ENCODE measurements at regions of chr10 and their contacts with region 1.

Region 1: DNA sequence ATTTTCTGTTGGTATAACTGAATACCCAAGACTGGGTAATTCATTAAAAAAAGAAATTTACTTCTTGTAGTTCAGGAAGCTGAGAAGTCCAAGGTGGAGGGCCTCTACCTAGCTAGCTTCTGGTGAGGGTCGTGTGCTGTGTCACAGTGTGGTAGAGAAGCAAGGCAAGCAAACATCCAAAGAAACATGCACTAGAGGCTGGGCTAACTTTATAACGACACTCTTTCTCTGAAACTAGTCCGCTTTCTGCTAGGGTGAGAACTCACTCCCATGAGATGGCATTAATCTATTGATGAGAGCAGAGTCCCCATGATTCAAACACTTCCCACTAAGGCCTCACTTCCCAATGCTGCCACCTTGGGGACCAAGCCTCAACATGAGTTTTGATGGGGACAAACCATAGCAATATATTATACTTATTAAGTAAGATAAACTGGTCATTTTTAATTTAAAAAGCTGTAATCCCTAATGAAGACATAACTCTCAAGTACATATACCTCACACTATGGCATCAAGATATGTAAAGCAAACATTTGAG is 50.8 kb downstream of the PHYHIPL start:
- DNase-seq: no peak
- ATAC-seq: no peak
- H3K4me3 ChIP-seq: no peak overlapping the region
- H3K27ac ChIP-seq: no peak overlapping the region
- H3K4me1 ChIP-seq: no peaks in the 10 kb centered on the region
- H3K27me3 ChIP-seq: no peaks in the 10 kb centered on the region
- CTCF ChIP-seq: no peak

Region 2: DNA sequence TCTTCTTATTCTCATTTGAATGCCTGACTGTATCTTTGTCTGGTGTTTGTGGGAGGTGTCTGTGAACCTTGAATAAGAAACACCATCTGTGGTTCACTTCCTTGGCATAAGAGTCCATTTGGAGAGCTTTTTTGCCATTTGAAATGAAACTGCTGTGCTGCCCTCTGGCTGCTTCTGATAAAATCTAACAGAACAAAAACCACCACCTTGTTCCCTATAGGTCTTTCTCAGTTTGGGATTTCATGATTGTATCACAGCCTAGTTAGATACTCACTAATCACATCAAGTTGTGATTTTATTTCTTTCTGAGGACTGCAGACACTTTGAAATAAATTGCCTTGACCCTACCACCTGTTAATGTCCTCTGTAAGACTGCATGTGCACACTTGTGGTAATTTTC is 237.9 kb after region 1 on chr10:
- intact Hi-C with region 1: loop called in 1 of 10 experiments (anchors 5 kb)
- DNase-seq: peak in 1 of 2 donors; percentile 19
- ATAC-seq: peak in 2 of 8 donors; percentile 38 to 42
- H3K4me3 ChIP-seq: no peak overlapping the region
- H3K27ac ChIP-seq: no peak overlapping the region
- H3K4me1 ChIP-seq: peaks cover 0 to 8% (median 0%) of the 10 kb centered on the region in 9 donors
- H3K27me3 ChIP-seq: no peaks in the 10 kb centered on the region
- CTCF ChIP-seq: peak in 8 of 9 donors; percentile 12 to 63 (median 48)